ENCODE measurements at regions of chr15 and their contacts with region 1.

Region 1: GRCh38 chr15:39833515-39833981 is 50.9 kb upstream of the FSIP1 start:
- DNase-seq: peak; percentile 25
- H3K4me3 ChIP-seq: no peak overlapping the region
- H3K27ac ChIP-seq: no peak overlapping the region
- H3K4me1 ChIP-seq: no peaks in the 10 kb centered on the region
- H3K27me3 ChIP-seq: no peaks in the 10 kb centered on the region
- CTCF ChIP-seq: no peak

Region 2: GRCh38 chr15:39794954-39795353 is 38.6 kb before region 1 on chr15:
- CTCF ChIA-PET with region 1: no interaction called
- dilution Hi-C with region 1: no loop called
- in situ Hi-C with region 1: no loop called
- intact Hi-C with region 1: no loop called
- DNase-seq: no peak
- H3K4me3 ChIP-seq: no peak overlapping the region
- H3K27ac ChIP-seq: no peak overlapping the region
- H3K4me1 ChIP-seq: no peaks in the 10 kb centered on the region
- H3K27me3 ChIP-seq: no peaks in the 10 kb centered on the region
- CTCF ChIP-seq: no peak

Region 3: DNA sequence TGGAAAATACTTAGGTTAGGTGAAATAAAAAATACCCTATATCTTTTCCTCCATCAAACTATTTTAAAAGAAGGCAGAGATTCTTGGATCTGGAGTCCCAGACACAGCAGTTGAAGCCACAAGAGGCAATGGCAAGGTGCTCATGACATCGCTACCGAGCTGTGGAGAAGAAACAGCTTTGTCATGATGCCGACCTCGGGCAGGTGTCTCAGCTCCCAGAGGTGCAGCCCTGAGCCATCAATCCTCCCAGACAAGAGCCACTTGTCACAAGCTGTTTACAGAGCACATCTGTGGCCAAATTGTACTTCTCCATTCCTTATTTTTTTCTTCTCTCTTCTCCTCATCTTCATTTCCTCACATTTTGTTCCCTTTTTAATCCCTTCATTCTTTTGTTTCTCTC is 35.7 kb after region 1 on chr15:
- CTCF ChIA-PET with region 1: interaction called, 12 read pairs
- dilution Hi-C with region 1: no loop called
- in situ Hi-C with region 1: no loop called
- intact Hi-C with region 1: no loop called
- DNase-seq: no peak
- H3K4me3 ChIP-seq: no peak overlapping the region
- H3K27ac ChIP-seq: no peak overlapping the region
- H3K4me1 ChIP-seq: no peaks in the 10 kb centered on the region
- H3K27me3 ChIP-seq: no peaks in the 10 kb centered on the region
- CTCF ChIP-seq: no peak

Measured in mammary epithelial cell (primary cell).